Heart left ventricle (tissue), 16 donors: ENCODE measurements at regions of chr2 and their contacts with region 1.

Region 1: GRCh38 chr2:47850198-47850597 is 56.1 kb downstream of the FBXO11 start:
- DNase-seq: no peak
- ATAC-seq: no peak
- H3K4me3 ChIP-seq: no peak overlapping the region
- H3K27ac ChIP-seq: no peak overlapping the region
- H3K4me1 ChIP-seq: peaks cover 0 to 57% (median 19%) of the 10 kb centered on the region in 12 donors
- H3K27me3 ChIP-seq: no peaks in the 10 kb centered on the region
- CTCF ChIP-seq: no peak
- POLR2A ChIP-seq: no peak

Region 2: DNA sequence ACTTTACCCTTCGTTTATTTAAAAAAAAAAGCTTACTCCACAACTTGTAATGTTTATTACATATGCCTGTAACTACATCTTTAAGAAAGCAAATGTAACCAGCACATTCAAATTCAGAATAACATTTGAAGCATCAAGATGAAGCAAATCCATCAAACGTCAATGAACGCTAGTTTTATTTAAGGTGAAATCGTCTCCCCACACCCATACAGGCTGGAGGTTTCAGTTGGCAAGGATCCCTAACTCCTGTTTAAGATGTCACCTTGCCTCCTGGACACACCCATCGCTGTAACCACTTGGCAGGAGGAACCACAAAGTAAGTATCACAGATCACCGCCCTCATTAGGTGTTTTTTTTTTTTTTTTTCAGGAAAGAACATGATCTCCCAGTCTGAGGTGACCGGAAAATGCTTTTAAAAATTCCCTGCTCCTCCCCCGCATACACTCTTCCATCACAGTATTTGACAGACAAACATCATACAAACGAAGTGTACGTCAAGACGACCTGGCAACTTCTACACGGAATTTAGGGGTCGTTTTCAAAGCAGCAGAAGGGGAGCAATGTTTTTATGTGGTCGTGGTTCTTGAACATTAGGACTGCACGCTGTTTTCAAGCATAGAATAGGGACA is 675.4 kb before region 1 on chr2:
- intact Hi-C with region 1: no loop called
- DNase-seq: peak in 4 of 5 donors; percentile 36 to 52 (median 48)
- ATAC-seq: peak; percentile 2 to 30 (median 20)
- H3K4me3 ChIP-seq: peak overlapping the region; percentile 70 to 99 (median 94)
- H3K27ac ChIP-seq: peak overlapping the region; percentile 96 to 100 (median 98)
- H3K4me1 ChIP-seq: peaks cover 10 to 57% (median 47%) of the 10 kb centered on the region in 12 donors
- H3K27me3 ChIP-seq: no peaks in the 10 kb centered on the region
- CTCF ChIP-seq: no peak
- POLR2A ChIP-seq: no peak

Region 3: GRCh38 chr2:47724221-47724981 is 125.8 kb before region 1 on chr2:
- intact Hi-C with region 1: no loop called
- DNase-seq: no peak
- ATAC-seq: no peak
- H3K4me3 ChIP-seq: no peak overlapping the region
- H3K27ac ChIP-seq: no peak overlapping the region
- H3K4me1 ChIP-seq: no peaks in the 10 kb centered on the region
- H3K27me3 ChIP-seq: no peaks in the 10 kb centered on the region
- CTCF ChIP-seq: no peak
- POLR2A ChIP-seq: no peak

Region 4: GRCh38 chr2:47751875-47752357 is 98.3 kb before region 1 on chr2:
- intact Hi-C with region 1: no loop called
- DNase-seq: no peak
- ATAC-seq: no peak
- H3K4me3 ChIP-seq: no peak overlapping the region
- H3K27ac ChIP-seq: peak overlapping the region in 1 of 12 donors; percentile 74
- H3K4me1 ChIP-seq: peaks cover 0 to 19% (median 0%) of the 10 kb centered on the region in 12 donors
- H3K27me3 ChIP-seq: peaks cover 0 to 15% (median 0%) of the 10 kb centered on the region in 9 donors
- CTCF ChIP-seq: no peak
- POLR2A ChIP-seq: no peak

Region 5: GRCh38 chr2:48414980-48415835 is 565.0 kb after region 1 on chr2:
- intact Hi-C with region 1: loop called in 6 of 10 experiments (anchors 5 to 10 kb)
- DNase-seq: peak in 3 of 5 donors; percentile 18 to 47 (median 31)
- ATAC-seq: peak; percentile 43 to 64 (median 54)
- H3K4me3 ChIP-seq: peak overlapping the region in 1 of 12 donors; percentile 7
- H3K27ac ChIP-seq: peak overlapping the region in 3 of 12 donors; percentile 16 to 51 (median 26)
- H3K4me1 ChIP-seq: peaks cover 0 to 54% (median 26%) of the 10 kb centered on the region in 12 donors
- H3K27me3 ChIP-seq: no peaks in the 10 kb centered on the region
- CTCF ChIP-seq: no peak
- POLR2A ChIP-seq: no peak

Region 6: GRCh38 chr2:48420512-48421197 is 570.5 kb after region 1 on chr2:
- intact Hi-C with region 1: loop called in 6 of 10 experiments (anchors 5 to 10 kb)
- DNase-seq: peak; percentile 87 to 92 (median 89)
- ATAC-seq: peak; percentile 88 to 93 (median 93)
- H3K4me3 ChIP-seq: peak overlapping the region in 5 of 12 donors; percentile 1 to 14 (median 3)
- H3K27ac ChIP-seq: peak overlapping the region in 8 of 12 donors; percentile 0 to 59 (median 26)
- H3K4me1 ChIP-seq: peaks cover 0 to 24% (median 16%) of the 10 kb centered on the region in 12 donors
- H3K27me3 ChIP-seq: no peaks in the 10 kb centered on the region
- CTCF ChIP-seq: peak; percentile 93 to 99 (median 98)
- POLR2A ChIP-seq: no peak